H1 (cell line): ENCODE measurements at regions of chr3 and their contacts with region 1.

Region 1: DNA sequence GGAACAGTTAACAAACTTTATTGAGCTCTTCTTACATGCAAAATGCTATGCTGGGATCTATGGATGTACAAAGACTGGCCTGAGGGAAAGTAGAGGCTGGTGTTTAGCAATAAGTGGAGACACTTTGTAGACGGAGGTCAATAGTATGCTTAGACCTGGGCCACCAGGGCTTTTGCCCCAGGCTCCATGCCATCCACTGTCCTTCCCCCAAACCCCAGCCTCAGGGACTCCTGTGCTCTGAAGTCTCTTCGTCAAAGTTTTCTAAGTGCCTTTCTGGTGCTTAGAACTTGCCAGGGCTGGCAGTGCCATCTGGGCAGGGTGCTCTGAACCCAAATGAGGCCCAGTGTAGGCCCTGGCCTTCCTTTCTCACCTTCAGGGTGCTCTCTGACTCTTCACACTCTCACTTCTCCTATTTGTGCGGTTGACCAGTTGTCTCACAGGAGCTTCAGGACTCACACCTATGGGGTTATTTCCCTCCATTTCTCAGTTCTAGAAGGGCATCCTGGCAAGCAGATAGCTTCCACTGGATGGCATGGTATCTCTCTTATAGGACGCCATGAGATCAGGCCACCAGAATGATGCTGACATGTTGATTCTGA is 21.8 kb upstream of the KCNAB1 start:
- DNase-seq: no peak
- H3K4me3 ChIP-seq: no peak overlapping the region
- H3K27ac ChIP-seq: no peak overlapping the region
- H3K4me1 ChIP-seq: peaks cover 0 to 5% (median under 1%) of the 10 kb centered on the region in 4 experiments; a peak in 3 of 7 replicates
- H3K27me3 ChIP-seq: no peaks in the 10 kb centered on the region
- CTCF ChIP-seq: no peak
- EP300 ChIP-seq: no peak
- POLR2A ChIP-seq: no peak
- RAD21 ChIP-seq: no peak

Region 2: DNA sequence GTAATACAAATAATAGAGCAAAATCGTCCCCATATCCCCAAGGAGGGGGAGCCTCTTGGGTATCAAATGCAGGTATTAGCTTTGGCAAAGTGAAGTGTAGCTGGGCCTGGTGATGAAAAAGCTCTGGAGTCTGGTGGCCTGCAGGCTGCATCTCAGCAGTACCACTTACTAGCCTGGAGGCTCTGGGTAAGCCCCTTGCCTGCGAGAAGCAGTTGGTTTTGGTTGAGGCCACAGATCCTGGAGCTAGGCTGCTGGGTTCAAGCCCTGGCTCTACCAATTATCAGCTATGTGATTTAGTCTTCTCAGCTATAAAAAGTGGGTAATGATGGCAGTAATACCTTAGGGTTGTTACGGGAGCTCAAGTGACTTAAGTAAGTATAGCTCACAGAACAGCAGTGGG is 27.9 kb after region 1 on chr3:
- CTCF ChIA-PET with region 1: interaction called, 11 read pairs
- POLR2A ChIA-PET with region 1: no interaction called
- DNase-seq: no peak
- H3K4me3 ChIP-seq: no peak overlapping the region
- H3K27ac ChIP-seq: no peak overlapping the region
- H3K4me1 ChIP-seq: no peaks in the 10 kb centered on the region
- H3K27me3 ChIP-seq: no peaks in the 10 kb centered on the region
- CTCF ChIP-seq: no peak
- EP300 ChIP-seq: no peak
- POLR2A ChIP-seq: no peak
- RAD21 ChIP-seq: no peak